Activated B cell treated with CpG ODN at 0.5 μM for 24 hours (primary cell): ENCODE measurements at regions of chr11 and their contacts with region 1.

Region 1: GRCh38 chr11:19561011-19561410 is 151.6 kb upstream of the NAV2 start:
- DNase-seq: no peak
- ATAC-seq: no peak
- H3K4me3 Mint-ChIP-seq: no peak overlapping the region
- H3K27ac Mint-ChIP-seq: no peak overlapping the region
- H3K4me1 Mint-ChIP-seq: no peaks in the 10 kb centered on the region
- H3K27me3 Mint-ChIP-seq: peaks cover 16% of the 10 kb centered on the region
- CTCF ChIP-seq: no peak

Region 2: GRCh38 chr11:19398772-19399527 is 162.1 kb before region 1 on chr11:
- CTCF ChIA-PET with region 1: no interaction called
- POLR2A ChIA-PET with region 1: no interaction called
- intact Hi-C with region 1: no loop called
- DNase-seq: no peak
- ATAC-seq: no peak
- H3K4me3 Mint-ChIP-seq: no peak overlapping the region
- H3K27ac Mint-ChIP-seq: no peak overlapping the region
- H3K4me1 Mint-ChIP-seq: no peaks in the 10 kb centered on the region
- H3K27me3 Mint-ChIP-seq: peaks cover 6% of the 10 kb centered on the region
- CTCF ChIP-seq: no peak

Region 3: GRCh38 chr11:19573666-19574065 is 12.7 kb after region 1 on chr11:
- CTCF ChIA-PET with region 1: interaction called, 13 read pairs
- POLR2A ChIA-PET with region 1: no interaction called
- intact Hi-C with region 1: no loop called
- DNase-seq: no peak
- ATAC-seq: no peak
- H3K4me3 Mint-ChIP-seq: no peak overlapping the region
- H3K27ac Mint-ChIP-seq: no peak overlapping the region
- H3K4me1 Mint-ChIP-seq: no peaks in the 10 kb centered on the region
- H3K27me3 Mint-ChIP-seq: no peaks in the 10 kb centered on the region
- CTCF ChIP-seq: no peak

Region 4: GRCh38 chr11:19614370-19614940 is 53.4 kb after region 1 on chr11:
- CTCF ChIA-PET with region 1: no interaction called
- POLR2A ChIA-PET with region 1: no interaction called
- intact Hi-C with region 1: no loop called
- DNase-seq: no peak
- ATAC-seq: no peak
- H3K4me3 Mint-ChIP-seq: no peak overlapping the region
- H3K27ac Mint-ChIP-seq: no peak overlapping the region
- H3K4me1 Mint-ChIP-seq: no peaks in the 10 kb centered on the region
- H3K27me3 Mint-ChIP-seq: no peaks in the 10 kb centered on the region
- CTCF ChIP-seq: no peak

Region 5: GRCh38 chr11:19800162-19800561 is 239.2 kb after region 1 on chr11:
- CTCF ChIA-PET with region 1: interaction called, 3 read pairs
- POLR2A ChIA-PET with region 1: no interaction called
- intact Hi-C with region 1: loop called (anchors 2 kb)
- DNase-seq: no peak
- ATAC-seq: no peak
- H3K4me3 Mint-ChIP-seq: no peak overlapping the region
- H3K27ac Mint-ChIP-seq: no peak overlapping the region
- H3K4me1 Mint-ChIP-seq: no peaks in the 10 kb centered on the region
- H3K27me3 Mint-ChIP-seq: peaks cover 4% of the 10 kb centered on the region
- CTCF ChIP-seq: no peak

Region 6: DNA sequence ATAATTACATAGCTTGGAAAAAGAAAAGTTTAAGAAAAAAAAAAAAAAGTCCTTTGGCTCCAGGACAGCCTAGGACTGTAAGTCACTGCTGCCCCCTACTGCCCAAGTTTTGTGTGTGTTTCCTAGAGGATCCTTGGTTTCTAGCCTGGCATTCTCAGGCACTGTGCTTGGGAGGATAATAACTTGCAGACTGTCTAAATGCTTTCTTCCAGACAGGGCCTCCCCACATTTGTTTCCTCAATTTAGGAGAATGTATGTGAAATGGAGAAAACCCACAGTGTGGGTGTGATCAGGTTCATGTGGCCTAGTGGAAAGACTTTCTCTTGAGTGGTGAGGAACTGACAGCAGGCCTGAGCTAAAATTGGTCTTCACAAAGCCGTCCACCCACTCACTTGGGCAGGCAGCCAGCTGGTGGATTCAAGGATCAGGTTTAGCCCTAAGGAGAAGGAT is 342.6 kb after region 1 on chr11:
- CTCF ChIA-PET with region 1: interaction called, 11 read pairs
- POLR2A ChIA-PET with region 1: no interaction called
- intact Hi-C with region 1: loop called (anchors 1 kb)
- DNase-seq: no peak
- ATAC-seq: no peak
- H3K4me3 Mint-ChIP-seq: no peak overlapping the region
- H3K27ac Mint-ChIP-seq: no peak overlapping the region
- H3K4me1 Mint-ChIP-seq: no peaks in the 10 kb centered on the region
- H3K27me3 Mint-ChIP-seq: peaks cover 2% of the 10 kb centered on the region
- CTCF ChIP-seq: no peak

Region 7: GRCh38 chr11:20127671-20128527 is 566.9 kb after region 1 on chr11:
- CTCF ChIA-PET with region 1: interaction called, 3 read pairs
- POLR2A ChIA-PET with region 1: no interaction called
- intact Hi-C with region 1: loop called (anchors 1 kb)
- DNase-seq: peak; percentile 50
- ATAC-seq: peak; percentile 74
- H3K4me3 Mint-ChIP-seq: no peak overlapping the region
- H3K27ac Mint-ChIP-seq: no peak overlapping the region
- H3K4me1 Mint-ChIP-seq: peaks cover 10% of the 10 kb centered on the region
- H3K27me3 Mint-ChIP-seq: peaks cover 14% of the 10 kb centered on the region
- CTCF ChIP-seq: no peak